Cardiac septum (tissue), 1 donor: ENCODE measurements at regions of chr1 and their contacts with region 1.

Region 1: DNA sequence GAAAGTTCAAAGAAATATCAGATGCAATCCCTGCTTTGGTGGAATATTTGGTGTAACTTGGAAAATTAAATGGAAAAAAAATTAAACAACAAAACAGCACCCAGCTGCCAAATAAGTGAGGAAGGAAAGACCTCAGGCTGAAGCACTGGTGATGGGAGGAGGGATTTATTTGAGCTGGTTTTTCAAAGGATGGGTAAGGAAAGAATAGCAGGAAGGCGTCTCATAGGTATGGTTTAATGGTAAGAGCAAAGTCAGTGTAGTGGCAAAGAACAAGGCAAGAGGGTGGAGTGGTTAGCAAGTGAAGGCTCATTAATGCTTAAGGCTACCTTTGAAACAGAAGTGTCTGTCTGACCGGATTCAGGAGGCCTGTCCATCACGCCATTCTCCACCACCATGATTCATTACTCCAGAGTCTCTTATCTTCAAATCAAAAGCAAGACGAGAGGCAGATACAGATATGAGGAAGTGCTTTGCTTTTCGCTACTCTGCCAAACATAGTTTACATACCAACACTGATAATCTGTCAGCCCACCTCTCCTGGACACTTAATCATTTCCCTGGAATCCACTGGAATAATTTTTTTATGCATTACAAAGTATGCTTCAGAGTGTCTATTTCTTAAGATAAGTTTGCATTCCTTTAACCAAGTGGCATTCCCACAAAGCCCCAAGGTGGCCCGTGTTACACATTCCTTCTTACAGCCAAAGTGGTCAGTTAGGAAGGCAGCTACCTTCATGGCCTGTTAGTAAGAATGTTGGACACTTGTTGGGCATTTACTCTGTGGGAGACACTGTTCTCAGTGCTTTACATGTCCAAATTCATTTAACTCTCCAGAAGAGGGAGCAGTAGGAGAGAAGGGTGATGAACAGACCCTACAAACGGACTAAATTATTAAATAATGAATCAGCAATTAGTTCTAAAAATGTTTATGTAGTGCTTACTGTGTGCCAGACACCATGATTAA is 146.6 kb downstream of the ROR1 start:
- DNase-seq: no peak

Region 2: DNA sequence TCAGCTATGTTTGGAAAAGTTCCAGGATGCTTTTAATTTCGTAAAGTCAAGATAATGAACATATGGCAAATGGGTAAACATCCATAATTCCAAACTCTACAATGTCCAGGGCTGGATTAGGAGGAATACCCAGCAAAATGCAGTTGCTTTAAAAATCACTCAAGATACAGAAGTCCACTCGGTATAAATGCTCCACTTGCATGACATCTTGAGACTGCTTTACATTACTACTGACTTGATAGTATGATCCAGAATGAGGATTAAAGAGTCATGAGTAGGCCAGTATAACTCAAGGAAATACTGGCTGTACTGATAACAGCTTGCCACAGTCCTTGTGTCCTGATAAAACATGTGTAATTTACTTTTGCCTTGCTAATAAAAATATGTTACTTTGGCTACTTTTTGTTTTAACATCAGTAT is 1381.4 kb before region 1 on chr1:
- intact Hi-C with region 1: no loop called
- DNase-seq: no peak

Region 3: DNA sequence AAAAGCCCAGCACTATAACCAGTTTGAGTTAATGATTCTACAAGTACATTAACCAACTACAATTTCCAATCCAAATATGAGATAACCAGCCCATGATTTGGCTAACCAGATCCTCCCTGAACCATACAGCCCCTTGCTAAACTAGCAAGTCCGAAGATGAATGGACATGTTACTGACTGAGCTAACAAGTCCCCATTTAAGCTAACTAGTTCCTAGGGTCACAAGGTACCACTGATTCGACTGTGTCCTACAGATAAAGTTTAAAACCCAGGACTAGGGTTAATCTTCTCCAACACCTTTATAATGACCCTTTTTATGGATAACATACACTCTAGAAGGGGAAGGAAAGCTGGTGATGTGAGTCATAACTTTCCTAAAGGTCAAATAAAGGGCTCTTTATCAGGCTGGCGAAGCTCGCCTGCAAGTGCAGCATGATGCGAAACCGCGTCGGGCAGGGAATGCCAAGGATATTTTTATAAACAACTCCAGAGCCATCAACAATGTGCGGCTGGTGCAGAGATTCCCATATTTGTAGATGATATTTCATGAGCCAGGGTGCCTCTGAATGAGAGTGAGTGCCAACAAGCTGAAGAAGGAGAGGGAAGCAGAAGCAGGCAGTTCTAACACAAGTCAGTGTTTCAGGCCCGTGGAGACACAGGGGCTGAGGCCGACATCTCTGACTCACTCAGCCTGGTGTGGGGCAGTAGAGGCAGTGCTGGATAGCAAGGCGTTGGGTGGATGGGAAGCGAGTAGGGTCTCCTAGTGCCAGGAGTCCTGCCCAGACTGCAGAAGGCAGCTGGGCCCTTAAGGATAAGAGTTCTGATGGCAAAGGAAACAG is 222.2 kb before region 1 on chr1:
- intact Hi-C with region 1: loop called (anchors 2 kb)
- DNase-seq: peak; percentile 80